ENCODE measurements at regions of chr1 and their contacts with region 1.

Region 1: DNA sequence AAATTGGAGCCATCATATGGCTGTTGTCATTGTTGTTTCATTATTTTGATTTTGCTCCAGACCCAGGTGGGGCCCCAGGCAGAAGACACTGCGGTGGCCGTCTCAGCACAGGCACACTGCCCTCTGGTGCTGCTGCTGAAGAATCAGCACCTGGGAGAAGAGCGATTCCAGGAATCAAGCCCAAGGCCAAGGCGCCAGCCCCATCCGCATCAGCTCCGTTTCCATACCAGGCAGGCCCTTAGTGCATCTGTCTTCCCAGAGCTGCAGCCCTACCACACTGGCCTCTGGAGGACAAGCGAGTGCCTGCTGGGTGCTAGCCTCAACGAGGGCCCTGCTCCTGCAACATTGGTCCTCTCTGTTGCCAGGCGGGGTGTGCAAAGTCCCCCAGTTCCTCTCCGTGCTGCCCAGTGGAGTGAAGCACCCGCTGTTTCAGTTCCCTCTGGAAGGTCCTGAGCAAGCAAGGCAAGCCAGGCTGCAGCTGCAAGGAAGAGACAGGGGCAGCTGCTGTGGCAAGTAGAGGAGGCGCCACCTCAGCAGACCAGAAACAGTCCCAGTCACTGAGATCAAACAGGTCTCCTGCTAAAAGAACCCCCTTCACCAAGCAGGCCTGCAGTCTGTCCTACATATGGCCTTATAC is 5.2 kb downstream of the GRIK3 start:
- DNase-seq: peak; percentile 67
- ATAC-seq: peak; percentile 74
- H3K4me3 Mint-ChIP-seq: no peak overlapping the region
- H3K27ac Mint-ChIP-seq: no peak overlapping the region
- H3K4me1 Mint-ChIP-seq: peaks cover 37% of the 10 kb centered on the region
- H3K27me3 Mint-ChIP-seq: peaks cover 48% of the 10 kb centered on the region
- CTCF ChIP-seq: no peak

Region 2: DNA sequence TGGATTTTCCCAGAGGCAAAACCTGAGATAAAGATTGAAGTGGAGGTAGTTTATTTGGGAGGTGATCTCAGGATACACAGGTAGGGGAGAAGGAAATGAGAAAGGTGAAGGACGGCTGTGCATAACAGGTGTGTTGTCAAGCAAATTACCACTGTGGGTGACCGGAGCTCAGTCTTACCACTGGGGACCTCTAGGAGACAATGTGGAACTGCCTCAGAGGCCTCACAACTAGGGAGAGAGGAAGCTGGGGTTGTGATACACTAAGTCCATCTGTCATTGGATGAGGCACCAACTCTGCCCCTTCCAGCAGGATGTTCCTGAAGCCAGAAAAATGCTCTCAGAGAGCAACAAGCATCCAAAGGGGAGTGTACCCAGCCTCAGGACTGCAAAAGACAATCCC is 27.4 kb before region 1 on chr1:
- CTCF ChIA-PET with region 1: interaction called, 15 read pairs
- POLR2A ChIA-PET with region 1: no interaction called
- DNase-seq: peak; percentile 24
- ATAC-seq: peak; percentile 94
- H3K4me3 Mint-ChIP-seq: no peak overlapping the region
- H3K27ac Mint-ChIP-seq: peak overlapping the region; percentile 4
- H3K4me1 Mint-ChIP-seq: peaks cover 40% of the 10 kb centered on the region
- H3K27me3 Mint-ChIP-seq: no peaks in the 10 kb centered on the region
- CTCF ChIP-seq: no peak